ENCODE measurements at regions of chr3 and their contacts with region 1.

Region 1: GRCh38 chr3:126752303-126752842 is 48.3 kb downstream of the CHCHD6 start:
- DNase-seq: peak; percentile 80 to 88
- ATAC-seq: peak; percentile 93 to 99 (median 95)
- H3K4me3 ChIP-seq: no peak overlapping the region
- H3K27ac ChIP-seq: no peak overlapping the region
- H3K4me1 ChIP-seq: peaks cover 9% of the 10 kb centered on the region
- H3K27me3 ChIP-seq: no peaks in the 10 kb centered on the region
- CTCF ChIP-seq: peak; percentile 91

Region 2: GRCh38 chr3:126124148-126124868 is 628.1 kb before region 1 on chr3:
- intact Hi-C with region 1: no loop called
- DNase-seq: peak; percentile 7 to 44
- ATAC-seq: no peak
- H3K4me3 ChIP-seq: no peak overlapping the region
- H3K27ac ChIP-seq: no peak overlapping the region
- H3K4me1 ChIP-seq: peaks cover 14% of the 10 kb centered on the region
- H3K27me3 ChIP-seq: no peaks in the 10 kb centered on the region
- CTCF ChIP-seq: no peak

Region 3: DNA sequence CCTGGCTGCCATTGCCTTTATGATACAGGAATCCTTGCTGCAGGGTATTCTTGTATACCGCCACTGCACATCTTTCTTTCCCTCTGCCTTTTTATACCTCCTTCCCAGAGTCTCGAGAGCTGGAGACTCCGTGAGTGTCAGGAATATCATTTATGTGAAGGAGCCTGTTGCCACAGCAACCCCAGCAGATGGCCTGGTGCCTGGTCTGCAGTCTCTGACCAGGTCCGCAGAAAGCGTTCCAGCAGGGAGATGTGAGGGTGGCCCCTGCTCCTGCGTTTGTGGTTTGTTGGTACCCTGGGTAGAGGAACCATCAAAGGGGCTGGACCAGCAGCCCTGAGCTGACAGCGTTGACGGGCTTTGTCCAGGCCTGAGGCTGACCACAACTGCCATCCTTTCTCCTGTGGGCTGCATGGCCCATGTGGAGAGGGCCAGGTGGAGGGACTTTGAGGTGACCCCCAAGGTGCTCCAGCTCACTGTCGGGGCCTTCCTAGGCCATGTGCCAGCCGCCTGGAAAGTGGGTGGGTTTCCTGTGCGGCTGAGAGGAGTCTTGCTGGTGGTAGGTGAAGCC is 137.3 kb after region 1 on chr3:
- intact Hi-C with region 1: loop called in 1 of 2 experiments (anchors 5 kb)
- DNase-seq: no peak
- ATAC-seq: no peak
- H3K4me3 ChIP-seq: no peak overlapping the region
- H3K27ac ChIP-seq: no peak overlapping the region
- H3K4me1 ChIP-seq: peaks cover 13% of the 10 kb centered on the region
- H3K27me3 ChIP-seq: no peaks in the 10 kb centered on the region
- CTCF ChIP-seq: no peak

Region 4: GRCh38 chr3:126982471-126983175 is 230.2 kb after region 1 on chr3 and contains the start of gene PLXNA1:
- intact Hi-C with region 1: loop called (anchors 1 to 5 kb)
- DNase-seq: peak; percentile 84 to 88
- ATAC-seq: peak; percentile 85 to 92 (median 89)
- H3K4me3 ChIP-seq: peak within 1 kb of the TSS; percentile 80
- H3K27ac ChIP-seq: peak within 1 kb of the TSS; percentile 62
- H3K4me1 ChIP-seq: peaks cover 11% of the 10 kb centered on the region
- H3K27me3 ChIP-seq: no peaks in the 10 kb centered on the region
- CTCF ChIP-seq: peak; percentile 75
- total RNA-seq, gene PLXNA1: 14.7 to 20.1 (median 15.7) TPM

Region 5: DNA sequence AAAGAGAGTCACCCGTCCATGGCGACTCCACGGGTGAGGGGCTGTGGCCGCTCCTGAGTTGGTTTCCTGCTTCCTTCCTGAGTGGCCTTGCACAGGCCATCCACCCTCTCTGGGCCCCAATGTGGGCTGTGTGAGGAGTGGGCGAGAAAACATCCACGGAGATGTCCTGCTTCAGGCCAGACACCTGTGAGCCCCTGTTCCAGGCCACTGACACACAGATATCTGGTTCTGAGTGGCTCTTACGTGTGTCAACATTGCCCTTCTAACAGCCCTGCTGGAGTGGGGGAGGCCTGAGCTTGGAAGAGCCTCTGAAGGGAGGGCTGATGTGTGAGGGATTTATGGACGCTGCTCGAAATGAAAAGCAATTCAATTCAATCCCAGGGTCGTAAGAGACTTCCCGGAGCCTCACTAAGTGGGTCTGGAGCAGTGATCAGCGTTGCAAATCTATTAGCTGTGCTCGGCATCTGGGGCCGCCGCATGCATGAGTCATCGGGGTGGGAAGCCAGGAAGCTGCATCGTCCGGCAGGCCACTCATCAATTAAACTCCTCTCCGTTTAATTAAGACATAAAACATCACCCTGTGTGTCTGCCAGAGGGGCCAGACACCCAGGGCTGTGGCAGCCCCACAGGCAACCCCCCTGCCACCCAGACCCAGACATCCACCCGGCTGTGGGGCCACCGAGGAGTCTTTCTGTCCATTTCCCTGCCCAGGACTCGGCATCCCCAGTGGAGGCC is 420.6 kb after region 1 on chr3:
- intact Hi-C with region 1: loop called in 1 of 2 experiments (anchors 5 kb)
- DNase-seq: no peak
- ATAC-seq: no peak
- H3K4me3 ChIP-seq: no peak overlapping the region
- H3K27ac ChIP-seq: no peak overlapping the region
- H3K4me1 ChIP-seq: peaks cover 12% of the 10 kb centered on the region
- H3K27me3 ChIP-seq: no peaks in the 10 kb centered on the region
- CTCF ChIP-seq: no peak

Region 6: GRCh38 chr3:127455541-127456450 is 703.4 kb after region 1 on chr3:
- intact Hi-C with region 1: loop called (anchors 2 to 10 kb)
- DNase-seq: peak; percentile 76 to 82
- ATAC-seq: peak; percentile 87 to 93 (median 89)
- H3K4me3 ChIP-seq: peak overlapping the region; percentile 52
- H3K27ac ChIP-seq: no peak overlapping the region
- H3K4me1 ChIP-seq: peaks cover 5% of the 10 kb centered on the region
- H3K27me3 ChIP-seq: peaks cover 0 to 57% (median 20%) of the 10 kb centered on the region in 3 donors
- CTCF ChIP-seq: peak; percentile 84

Region 7: DNA sequence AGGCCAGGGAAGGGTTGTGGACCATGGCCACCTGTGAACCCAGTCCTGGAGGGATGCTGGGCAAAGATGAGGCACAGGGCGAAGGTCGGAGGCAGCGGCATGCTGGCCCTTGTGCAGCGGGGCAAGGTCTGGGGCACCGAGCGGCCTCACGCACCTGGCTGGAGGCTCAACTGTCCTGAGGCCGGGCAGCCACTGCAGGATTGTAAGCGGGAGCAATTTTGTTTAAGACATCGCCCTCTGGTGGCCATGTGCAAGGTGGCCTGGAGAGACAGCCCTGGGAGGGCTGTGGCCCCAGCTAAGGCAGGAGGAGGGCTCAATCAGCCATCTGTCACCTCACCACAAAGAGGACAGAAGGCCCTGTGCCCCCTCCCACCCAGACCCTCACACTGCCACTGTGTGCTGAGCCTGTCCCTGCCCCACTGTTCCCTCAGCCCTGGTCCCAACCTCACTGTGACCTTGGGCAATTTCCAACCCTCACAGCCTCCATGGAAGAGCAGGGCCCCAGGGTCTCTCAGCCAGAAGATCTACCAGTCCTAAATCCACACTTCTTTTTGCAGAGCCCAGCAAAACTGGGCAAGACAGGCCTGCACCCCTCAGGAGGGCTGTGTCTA is 791.9 kb after region 1 on chr3:
- intact Hi-C with region 1: loop called (anchors 5 kb)
- DNase-seq: peak; percentile 69 to 84
- ATAC-seq: peak; percentile 42 to 69 (median 58)
- H3K4me3 ChIP-seq: no peak overlapping the region
- H3K27ac ChIP-seq: no peak overlapping the region
- H3K4me1 ChIP-seq: no peaks in the 10 kb centered on the region
- H3K27me3 ChIP-seq: no peaks in the 10 kb centered on the region
- CTCF ChIP-seq: peak; percentile 74

Measured in psoas muscle (tissue), 8 donors.